Left cardiac atrium (tissue), 4 donors: ENCODE measurements at regions of chr19 and their contacts with region 1.

Region 1: DNA sequence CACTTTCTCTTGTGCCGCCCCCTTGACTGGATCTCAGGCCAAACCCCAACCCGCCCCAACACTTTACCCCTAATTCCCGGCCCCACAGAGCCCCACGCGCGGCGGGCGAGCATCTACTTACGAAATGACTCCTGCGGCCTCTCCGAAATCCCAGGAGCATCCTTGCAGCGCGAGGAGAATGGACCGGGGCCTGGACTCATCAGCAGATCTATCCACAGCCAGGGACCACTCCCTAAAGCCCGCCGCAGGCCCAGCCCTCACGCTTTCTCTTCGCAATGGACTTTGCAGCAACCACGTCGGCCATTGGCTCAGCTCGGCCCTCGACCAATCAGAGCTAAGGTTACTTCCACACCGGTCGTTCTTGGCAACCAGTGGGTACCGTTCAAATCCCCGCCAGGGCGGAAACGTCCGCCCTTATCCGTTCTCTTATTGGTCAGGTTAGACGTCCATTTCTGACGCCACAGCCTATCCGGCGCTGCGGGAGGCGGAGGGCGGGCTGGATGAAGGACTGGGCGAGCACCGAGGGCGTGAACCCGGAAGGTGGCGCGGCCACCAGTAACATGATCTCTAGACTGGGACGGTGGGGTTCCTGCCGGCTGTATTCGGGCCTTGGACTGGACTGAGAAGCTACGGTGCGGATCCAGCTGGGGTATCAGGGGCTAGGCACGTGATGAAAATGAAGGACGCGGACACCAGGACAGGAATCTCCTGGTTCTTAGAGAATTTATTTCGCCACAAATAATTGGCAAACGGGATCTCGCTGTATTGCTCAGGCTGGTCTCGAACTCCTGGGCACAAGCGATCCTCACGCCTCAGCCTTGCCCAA is at the starts of genes CEP89 and FAAP24:
- DNase-seq: peak; percentile 98
- ATAC-seq: peak; percentile 99 to 100
- total RNA-seq, gene CEP89: 9.5 to 10.6 TPM
- total RNA-seq, gene FAAP24: 0.79 to 1.9 TPM

Region 2: GRCh38 chr19:33110137-33110910 is 138.4 kb after region 1 on chr19:
- intact Hi-C with region 1: loop called in 1 of 2 experiments (anchors 10 kb)
- DNase-seq: no peak
- ATAC-seq: no peak